ENCODE measurements at regions of chr4 and their contacts with region 1.

Region 1: GRCh38 chr4:38319456-38320342 is 344.3 kb upstream of the KLF3 start:
- DNase-seq: peak; percentile 97
- ATAC-seq: peak; percentile 70
- H3K4me3 Mint-ChIP-seq: peak overlapping the region; percentile 11; the same call in 1 of the 2 replicates
- H3K27ac Mint-ChIP-seq: peak overlapping the region; percentile 87
- H3K4me1 Mint-ChIP-seq: peaks cover 28% of the 10 kb centered on the region
- H3K27me3 Mint-ChIP-seq: peaks cover 5% of the 10 kb centered on the region; the same call in 1 of the 2 replicates
- CTCF ChIP-seq: peak; percentile 97

Region 2: DNA sequence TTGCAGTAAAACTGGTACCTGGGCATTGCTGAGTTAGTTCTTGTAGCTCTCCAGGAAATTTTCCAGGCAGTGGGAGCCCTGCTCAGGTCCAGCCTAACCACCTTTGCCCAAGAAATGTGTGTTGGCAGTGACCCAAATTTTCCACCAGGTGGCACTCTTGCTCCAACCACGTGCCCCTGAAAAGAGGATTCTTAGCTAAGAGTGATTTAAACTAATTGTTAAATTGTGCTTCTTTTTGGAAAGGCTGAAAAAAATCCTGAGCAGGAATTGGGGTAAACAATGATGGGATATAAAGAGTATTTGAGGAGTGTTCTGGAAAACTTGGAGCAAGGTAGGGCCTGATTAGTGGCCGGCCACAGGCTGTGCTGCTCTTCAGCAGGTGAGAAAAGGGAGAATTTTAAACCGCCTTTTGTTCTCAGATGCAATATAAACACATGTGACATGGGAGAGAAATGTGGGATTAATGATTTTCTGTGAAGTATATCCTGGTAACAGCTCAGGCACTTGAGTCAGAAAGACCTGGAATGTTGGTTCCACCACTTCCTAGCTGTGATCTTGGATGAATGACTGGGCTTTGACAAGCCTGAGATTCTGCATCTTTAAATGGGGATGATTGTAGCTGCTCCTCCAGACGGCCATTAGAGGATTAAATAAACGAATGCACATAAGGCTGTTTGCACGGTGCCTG is 139.9 kb before region 1 on chr4:
- CTCF ChIA-PET with region 1: interaction called, 24 read pairs
- POLR2A ChIA-PET with region 1: interaction called, 3 read pairs
- DNase-seq: peak; percentile 81
- ATAC-seq: peak; percentile 78
- H3K4me3 Mint-ChIP-seq: no peak overlapping the region
- H3K27ac Mint-ChIP-seq: no peak overlapping the region
- H3K4me1 Mint-ChIP-seq: peaks cover 7% of the 10 kb centered on the region
- H3K27me3 Mint-ChIP-seq: peaks cover 8% of the 10 kb centered on the region
- CTCF ChIP-seq: peak; percentile 91

Region 3: DNA sequence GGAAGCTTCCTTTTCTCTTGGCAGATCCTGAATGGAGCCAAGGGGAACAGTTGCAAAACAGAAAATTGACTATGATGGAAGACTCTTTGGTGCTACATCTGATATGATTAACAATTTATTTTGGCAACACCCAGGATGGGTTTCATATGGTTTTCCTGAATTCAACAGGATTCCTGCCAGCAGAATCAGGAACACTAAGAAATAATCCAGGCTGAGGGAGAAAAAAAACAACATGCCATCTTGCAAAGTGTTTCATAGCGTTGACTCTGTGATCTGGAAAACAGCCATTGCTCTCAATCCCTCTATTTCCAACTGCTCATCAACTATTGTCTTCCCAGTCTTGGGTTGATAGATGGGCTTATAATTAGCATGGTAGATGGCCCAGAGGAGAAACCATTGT is 40.5 kb after region 1 on chr4:
- CTCF ChIA-PET with region 1: no interaction called
- POLR2A ChIA-PET with region 1: no interaction called
- DNase-seq: no peak
- ATAC-seq: no peak
- H3K4me3 Mint-ChIP-seq: no peak overlapping the region
- H3K27ac Mint-ChIP-seq: no peak overlapping the region
- H3K4me1 Mint-ChIP-seq: no peaks in the 10 kb centered on the region
- H3K27me3 Mint-ChIP-seq: no peaks in the 10 kb centered on the region
- CTCF ChIP-seq: no peak

Region 4: DNA sequence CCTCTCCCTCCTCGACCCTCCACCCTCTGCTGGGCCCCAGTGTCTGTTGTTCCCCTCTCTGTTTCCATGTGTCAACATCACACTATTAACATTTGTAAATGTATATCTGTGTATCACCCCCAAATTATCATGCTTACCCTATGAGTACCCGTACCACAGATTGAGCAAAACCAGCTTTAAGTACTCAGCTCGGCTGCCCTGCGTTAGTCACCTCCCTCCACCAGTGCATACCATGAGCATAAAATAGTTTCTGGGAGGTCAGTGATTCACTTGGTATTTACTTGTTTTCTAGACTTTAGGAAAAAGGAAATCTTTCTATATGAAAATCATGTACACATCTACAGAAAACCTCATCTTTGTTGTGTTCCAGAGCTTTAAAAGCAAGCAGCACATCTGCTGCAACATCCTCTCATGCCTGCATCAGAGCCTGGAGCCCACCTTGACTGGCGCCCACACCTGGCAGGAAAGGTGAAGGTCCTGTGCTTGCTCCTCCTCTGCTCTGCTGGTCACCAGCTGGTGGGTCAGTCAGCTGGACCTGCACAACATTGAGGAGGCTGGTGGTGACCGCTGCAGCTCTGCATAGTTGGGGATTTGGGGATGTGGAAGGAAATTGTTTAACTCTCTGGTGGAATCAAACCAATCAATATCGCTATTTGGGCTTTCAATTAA is 129.9 kb after region 1 on chr4:
- CTCF ChIA-PET with region 1: interaction called, 13 read pairs
- POLR2A ChIA-PET with region 1: interaction called, 6 read pairs
- DNase-seq: peak; percentile 55
- ATAC-seq: peak; percentile 83
- H3K4me3 Mint-ChIP-seq: no peak overlapping the region
- H3K27ac Mint-ChIP-seq: no peak overlapping the region
- H3K4me1 Mint-ChIP-seq: peaks cover 9% of the 10 kb centered on the region
- H3K27me3 Mint-ChIP-seq: no peaks in the 10 kb centered on the region; the same call in 1 of the 2 replicates
- CTCF ChIP-seq: no peak

Region 5: GRCh38 chr4:38667085-38667893 is 347.6 kb after region 1 on chr4:
- CTCF ChIA-PET with region 1: interaction called, 27 read pairs
- POLR2A ChIA-PET with region 1: interaction called, 6 read pairs
- DNase-seq: peak; percentile 65
- ATAC-seq: peak; percentile 71
- H3K4me3 Mint-ChIP-seq: peak overlapping the region; percentile 89
- H3K27ac Mint-ChIP-seq: peak overlapping the region; percentile 99
- H3K4me1 Mint-ChIP-seq: peaks cover 73% of the 10 kb centered on the region
- H3K27me3 Mint-ChIP-seq: peaks cover 14% of the 10 kb centered on the region
- CTCF ChIP-seq: no peak

Region 6: GRCh38 chr4:38675146-38676121 is 355.7 kb after region 1 on chr4:
- CTCF ChIA-PET with region 1: interaction called, 39 read pairs
- POLR2A ChIA-PET with region 1: interaction called, 5 read pairs
- DNase-seq: peak; percentile 85
- ATAC-seq: peak; percentile 53
- H3K4me3 Mint-ChIP-seq: peak overlapping the region; percentile 36; the same call in 1 of the 2 replicates
- H3K27ac Mint-ChIP-seq: no peak overlapping the region
- H3K4me1 Mint-ChIP-seq: peaks cover 63% of the 10 kb centered on the region
- H3K27me3 Mint-ChIP-seq: no peaks in the 10 kb centered on the region
- CTCF ChIP-seq: peak; percentile 87

Measured in WTC11 (cell line).